ENCODE measurements at regions of chr19 and their contacts with region 1.

Region 1: DNA sequence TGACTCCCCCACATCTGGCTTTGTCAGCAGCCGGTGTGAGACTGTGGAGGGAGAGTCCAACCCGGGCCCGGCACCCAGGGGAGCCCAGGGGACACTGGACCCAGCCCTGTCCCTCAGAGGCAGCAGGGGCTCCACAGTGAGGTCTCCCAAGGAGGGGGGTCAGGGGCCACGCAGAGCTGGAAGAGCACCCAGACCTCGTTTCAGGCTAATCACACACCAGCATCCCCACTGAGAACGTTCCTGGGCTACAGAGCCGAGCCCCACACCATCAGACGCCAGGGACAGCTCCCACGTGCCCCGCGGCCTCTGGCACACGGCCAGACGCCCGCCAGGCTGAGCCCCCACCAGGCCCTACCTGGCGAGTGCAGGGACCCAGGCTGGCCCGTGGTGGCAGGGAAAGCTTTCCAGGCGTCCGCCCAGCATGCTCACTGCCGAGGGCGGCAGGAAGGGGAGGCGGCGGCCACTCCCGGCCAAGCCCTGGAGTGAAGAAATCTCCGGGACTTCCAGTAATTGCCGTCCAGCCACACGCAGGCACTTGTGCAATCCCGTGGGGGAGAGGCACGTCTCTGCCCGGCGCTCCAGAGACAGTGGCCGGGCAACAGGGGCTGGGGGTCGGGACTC is 19.2 kb downstream of the SBNO2 start:
- DNase-seq: peak; percentile 89 to 94
- ATAC-seq: peak; percentile 82 to 90
- H3K4me3 ChIP-seq: peak overlapping the region; percentile 22 to 50 (median 38)
- H3K27ac ChIP-seq: peak overlapping the region; percentile 86 to 96 (median 92)
- H3K4me1 ChIP-seq: peaks cover 48 to 52% of the 10 kb centered on the region in 2 donors
- H3K27me3 ChIP-seq: no peaks in the 10 kb centered on the region
- CTCF ChIP-seq: no peak
- POLR2A ChIP-seq: peak; percentile 81 to 84

Region 2: DNA sequence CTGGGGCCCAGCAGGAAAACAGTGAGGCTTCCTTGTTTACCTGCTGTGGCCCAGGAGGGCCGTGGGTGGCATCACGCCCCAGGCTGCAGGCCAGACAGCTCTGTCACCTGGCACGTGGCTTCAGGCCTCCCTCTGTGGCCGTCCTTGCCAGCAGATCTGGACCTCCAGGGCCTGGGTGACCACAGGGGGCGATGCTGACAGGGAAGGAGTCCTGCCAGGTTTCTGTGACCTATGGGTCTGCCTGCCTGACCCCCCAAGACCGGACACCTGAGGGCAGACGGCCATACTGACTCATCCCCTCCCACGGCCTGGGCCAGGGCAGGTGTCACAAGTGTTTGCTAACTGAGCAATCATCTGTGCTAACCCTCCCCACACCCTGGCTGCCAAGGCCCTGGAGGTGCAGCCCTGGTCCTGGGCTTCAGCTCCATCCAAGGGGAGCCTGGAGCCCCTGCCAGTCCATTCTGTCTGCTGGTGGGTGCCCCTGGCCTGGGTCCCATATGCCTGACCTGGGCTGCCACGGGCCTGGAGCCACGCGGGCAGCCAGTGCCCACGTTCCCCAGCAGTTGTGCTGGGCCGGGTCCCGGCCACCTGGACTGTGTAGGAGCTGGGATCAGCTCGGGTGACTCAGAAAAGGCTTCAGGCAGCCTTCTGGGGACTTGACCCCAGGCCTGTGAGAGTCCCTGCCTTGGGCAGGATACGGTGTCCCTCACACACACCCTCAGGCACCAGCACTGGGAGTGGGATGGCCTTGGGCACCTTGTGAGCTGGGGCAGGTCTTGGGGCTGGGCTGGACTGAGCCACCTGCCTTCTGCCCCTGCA is 619.6 kb before region 1 on chr19:
- in situ Hi-C with region 1: no loop called
- intact Hi-C with region 1: no loop called
- DNase-seq: peak; percentile 33 to 80
- ATAC-seq: peak in 1 of 2 donors; percentile 23
- H3K4me3 ChIP-seq: no peak overlapping the region
- H3K27ac ChIP-seq: peak overlapping the region; percentile 71 to 98 (median 93)
- H3K4me1 ChIP-seq: peaks cover 31 to 32% of the 10 kb centered on the region in 2 donors
- H3K27me3 ChIP-seq: no peaks in the 10 kb centered on the region
- CTCF ChIP-seq: no peak
- POLR2A ChIP-seq: no peak

Region 3: GRCh38 chr19:1113033-1113985 is 41.5 kb before region 1 on chr19:
- in situ Hi-C with region 1: no loop called
- intact Hi-C with region 1: loop called (anchors 5 kb)
- DNase-seq: peak; percentile 92 to 95
- ATAC-seq: peak; percentile 81 to 86
- H3K4me3 ChIP-seq: peak overlapping the region in 2 of 4 donors; percentile 12 to 29
- H3K27ac ChIP-seq: peak overlapping the region; percentile 73 to 81 (median 80)
- H3K4me1 ChIP-seq: peaks cover 5 to 12% of the 10 kb centered on the region in 2 donors
- H3K27me3 ChIP-seq: no peaks in the 10 kb centered on the region
- CTCF ChIP-seq: peak; percentile 93 to 99 (median 98)
- POLR2A ChIP-seq: peak in 1 of 2 donors; percentile 44